Endothelial cell of umbilical vein (primary cell): ENCODE measurements at regions of chr18 and their contacts with region 1.

Region 1: GRCh38 chr18:63518178-63519012 is 23.8 kb upstream of the SERPINB12 start:
- DNase-seq: peak; percentile 59
- H3K4me3 ChIP-seq: no peak overlapping the region
- H3K27ac ChIP-seq: no peak overlapping the region
- H3K4me1 ChIP-seq: no peaks in the 10 kb centered on the region
- H3K27me3 ChIP-seq: peaks cover 9 to 20% of the 10 kb centered on the region in 2 experiments
- CTCF ChIP-seq: peak; percentile 56 to 68
- POLR2A ChIP-seq: no peak

Region 2: DNA sequence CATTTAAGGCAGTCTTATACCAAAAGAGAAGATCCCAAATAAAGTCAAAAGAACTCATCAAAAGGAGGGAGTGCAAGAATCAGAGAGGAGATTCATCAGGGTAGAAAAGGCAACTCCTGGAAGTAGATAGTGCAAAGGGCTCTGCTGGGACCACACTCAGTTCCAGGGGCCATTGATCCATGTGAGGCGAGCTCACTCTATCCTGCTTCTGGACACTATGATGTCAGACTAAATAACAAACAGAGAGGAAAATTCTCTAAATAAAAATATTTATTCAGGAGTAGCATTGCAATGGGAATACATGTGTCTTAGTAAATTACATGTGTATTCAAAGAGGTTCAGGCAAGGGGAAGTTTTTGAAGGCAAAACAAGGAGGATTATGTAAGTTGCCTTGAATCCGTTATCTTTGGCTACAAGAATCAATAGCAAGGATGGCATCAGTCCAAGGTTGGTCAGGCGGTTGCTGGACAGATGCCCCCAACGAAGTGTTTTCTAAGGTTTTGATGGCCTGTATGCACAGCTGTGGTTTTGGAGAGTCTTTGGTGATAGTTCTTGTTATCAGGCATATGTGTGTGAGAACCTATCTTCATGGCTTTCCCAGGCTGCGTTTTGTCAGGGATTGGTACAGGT is 10.6 kb after region 1 on chr18:
- CTCF ChIA-PET with region 1: interaction called, 29 read pairs
- POLR2A ChIA-PET with region 1: no interaction called
- dilution Hi-C with region 1: no loop called
- intact Hi-C with region 1: no loop called
- DNase-seq: no peak
- H3K4me3 ChIP-seq: no peak overlapping the region
- H3K27ac ChIP-seq: no peak overlapping the region
- H3K4me1 ChIP-seq: no peaks in the 10 kb centered on the region
- H3K27me3 ChIP-seq: no peaks in the 10 kb centered on the region
- CTCF ChIP-seq: no peak
- POLR2A ChIP-seq: no peak

Region 3: GRCh38 chr18:63741769-63742168 is 223.4 kb after region 1 on chr18:
- CTCF ChIA-PET with region 1: interaction called, 43 read pairs
- POLR2A ChIA-PET with region 1: no interaction called
- dilution Hi-C with region 1: no loop called
- intact Hi-C with region 1: no loop called
- DNase-seq: no peak
- H3K4me3 ChIP-seq: no peak overlapping the region
- H3K27ac ChIP-seq: no peak overlapping the region
- H3K4me1 ChIP-seq: no peaks in the 10 kb centered on the region
- H3K27me3 ChIP-seq: no peaks in the 10 kb centered on the region
- CTCF ChIP-seq: no peak
- POLR2A ChIP-seq: no peak

Region 4: DNA sequence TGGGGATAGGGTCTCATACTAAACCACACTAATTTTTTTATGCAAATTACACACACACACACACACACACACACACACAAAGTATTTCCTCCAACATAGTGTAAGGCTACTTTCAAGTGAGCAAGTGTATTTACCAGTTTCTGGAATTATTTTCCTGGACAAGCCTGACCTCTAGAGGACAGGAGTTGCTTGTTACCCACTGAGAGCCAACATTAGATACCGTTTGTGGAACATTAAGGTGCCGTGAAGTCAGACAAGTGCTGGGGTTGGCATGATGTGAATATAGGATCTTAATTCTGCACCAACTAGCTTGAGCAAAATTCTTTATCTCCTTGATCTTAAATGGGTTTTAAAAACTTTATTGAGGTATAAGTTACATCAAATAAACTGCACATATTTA is 329.8 kb after region 1 on chr18:
- CTCF ChIA-PET with region 1: interaction called, 173 read pairs
- POLR2A ChIA-PET with region 1: no interaction called
- dilution Hi-C with region 1: no loop called
- intact Hi-C with region 1: loop called (anchors 1 kb)
- DNase-seq: peak; percentile 62
- H3K4me3 ChIP-seq: no peak overlapping the region
- H3K27ac ChIP-seq: no peak overlapping the region
- H3K4me1 ChIP-seq: no peaks in the 10 kb centered on the region
- H3K27me3 ChIP-seq: no peaks in the 10 kb centered on the region
- CTCF ChIP-seq: peak; percentile 56 to 57
- POLR2A ChIP-seq: no peak

Region 5: DNA sequence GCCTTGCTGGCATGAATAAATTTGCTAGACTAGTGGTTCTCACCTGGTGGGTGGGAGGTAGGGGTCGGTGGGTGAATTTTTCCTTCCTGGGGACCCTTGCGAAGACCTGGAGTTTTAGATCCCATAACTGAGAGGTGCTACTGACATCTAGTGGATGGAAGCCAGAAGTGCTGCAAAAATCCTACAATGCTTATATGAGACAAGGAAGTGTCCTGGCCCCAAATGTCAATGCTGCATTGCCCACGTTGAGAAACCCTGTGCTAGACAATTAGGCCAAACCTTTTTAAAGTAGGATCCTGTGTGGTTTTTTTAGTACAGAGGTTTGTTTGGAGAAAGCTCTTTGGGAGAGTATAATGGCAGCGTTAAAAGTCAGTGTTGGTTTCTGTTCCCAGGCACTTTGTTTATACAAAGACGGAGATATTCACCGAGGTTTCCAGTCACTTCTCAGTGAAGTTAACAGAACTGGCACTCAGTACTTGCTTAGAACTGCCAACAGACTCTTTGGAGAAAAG is 461.1 kb after region 1 on chr18:
- CTCF ChIA-PET with region 1: interaction called, 10 read pairs
- POLR2A ChIA-PET with region 1: no interaction called
- dilution Hi-C with region 1: no loop called
- intact Hi-C with region 1: loop called (anchors 1 kb)
- DNase-seq: peak; percentile 73
- H3K4me3 ChIP-seq: no peak overlapping the region
- H3K27ac ChIP-seq: no peak overlapping the region
- H3K4me1 ChIP-seq: peaks cover 2% of the 10 kb centered on the region
- H3K27me3 ChIP-seq: no peaks in the 10 kb centered on the region
- CTCF ChIP-seq: peak; percentile 83 to 84
- POLR2A ChIP-seq: no peak